ENCODE measurements at regions of chr17 and their contacts with region 1.

Region 1: GRCh38 chr17:12545877-12546513 is 119.7 kb upstream of the MYOCD start:
- DNase-seq: peak; percentile 64

Region 2: GRCh38 chr17:12599186-12599920 is 53.4 kb after region 1 on chr17:
- CTCF ChIA-PET with region 1: no interaction called
- POLR2A ChIA-PET with region 1: no interaction called
- DNase-seq: no peak

Region 3: DNA sequence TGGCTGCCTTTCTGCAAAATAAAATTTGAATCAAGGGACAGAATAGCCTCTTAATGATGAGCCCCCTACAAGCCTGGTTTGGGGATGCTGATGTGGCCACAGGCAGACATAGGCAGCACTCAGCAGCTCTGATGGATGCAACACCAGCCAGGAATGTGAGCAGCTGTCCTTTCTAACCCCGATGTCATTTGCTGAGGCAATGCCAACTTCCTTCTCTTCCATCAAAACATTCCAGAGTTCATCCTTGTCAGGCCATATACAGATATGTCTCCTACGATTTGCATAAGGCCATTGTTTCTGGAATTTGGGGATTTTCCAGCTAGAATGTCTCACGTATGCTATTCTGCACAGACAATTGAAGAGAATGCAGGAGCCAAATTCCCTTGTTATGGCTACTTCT is 67.6 kb after region 1 on chr17:
- CTCF ChIA-PET with region 1: no interaction called
- POLR2A ChIA-PET with region 1: no interaction called
- DNase-seq: no peak

Region 4: GRCh38 chr17:12665263-12666210 is 119.5 kb after region 1 on chr17 and contains the start of gene MYOCD:
- CTCF ChIA-PET with region 1: interaction called, 14 read pairs
- POLR2A ChIA-PET with region 1: interaction called, 3 read pairs
- DNase-seq: peak; percentile 62

Region 5: GRCh38 chr17:13153036-13153435 is 607.0 kb after region 1 on chr17:
- CTCF ChIA-PET with region 1: no interaction called
- POLR2A ChIA-PET with region 1: no interaction called
- DNase-seq: no peak